Activated CD8-positive, alpha-beta T cell treated with anti-CD3 and anti-CD28 coated beads, Interleukin-2, amount 10 ng/mL, durations not matched to agents 7 days and 5 days (primary cell): ENCODE measurements at regions of chr11 and their contacts with region 1.

Region 1: GRCh38 chr11:47407746-47408590 is at the start of gene SLC39A13:
- DNase-seq: peak; percentile 91
- ATAC-seq: peak; percentile 84
- H3K4me3 Mint-ChIP-seq: peak within 1 kb of the TSS; percentile 91
- H3K27ac Mint-ChIP-seq: peak within 1 kb of the TSS; percentile 90
- H3K4me1 Mint-ChIP-seq: peaks cover 20% of the 10 kb centered on the region
- H3K27me3 Mint-ChIP-seq: no peaks in the 10 kb centered on the region
- total RNA-seq, gene SLC39A13: 19.2 to 20.0 TPM

Region 2: DNA sequence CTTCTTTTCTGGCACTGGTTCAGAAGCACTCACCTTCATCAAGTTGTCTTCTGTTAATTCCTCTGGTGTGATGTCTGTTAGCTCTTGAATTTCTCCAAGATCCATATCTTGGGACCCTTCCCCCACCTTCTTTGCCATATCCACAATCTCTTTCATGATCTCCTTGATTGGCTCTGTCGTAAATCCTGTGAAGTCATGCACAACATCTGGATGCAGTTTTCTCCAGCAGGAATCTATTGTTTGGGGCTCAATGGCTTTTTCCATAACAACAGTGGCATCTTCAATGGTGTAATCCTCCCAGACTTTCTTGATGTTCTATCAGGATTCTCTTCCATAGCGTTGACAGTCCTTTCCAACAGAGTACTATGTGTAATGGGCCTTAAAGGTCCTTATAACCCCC is 374.5 kb before region 1 on chr11:
- CTCF ChIA-PET with region 1: no interaction called
- POLR2A ChIA-PET with region 1: no interaction called
- DNase-seq: no peak
- ATAC-seq: no peak
- H3K4me3 Mint-ChIP-seq: no peak overlapping the region
- H3K27ac Mint-ChIP-seq: no peak overlapping the region
- H3K4me1 Mint-ChIP-seq: peaks cover 2% of the 10 kb centered on the region
- H3K27me3 Mint-ChIP-seq: no peaks in the 10 kb centered on the region

Region 3: GRCh38 chr11:47269002-47269828 is 138.8 kb before region 1 on chr11:
- CTCF ChIA-PET with region 1: interaction called, 11 read pairs
- POLR2A ChIA-PET with region 1: interaction called, 3 read pairs
- DNase-seq: peak; percentile 90
- ATAC-seq: peak; percentile 55
- H3K4me3 Mint-ChIP-seq: peak overlapping the region; percentile 84
- H3K27ac Mint-ChIP-seq: peak overlapping the region; percentile 98
- H3K4me1 Mint-ChIP-seq: peaks cover 68% of the 10 kb centered on the region
- H3K27me3 Mint-ChIP-seq: no peaks in the 10 kb centered on the region

Region 4: DNA sequence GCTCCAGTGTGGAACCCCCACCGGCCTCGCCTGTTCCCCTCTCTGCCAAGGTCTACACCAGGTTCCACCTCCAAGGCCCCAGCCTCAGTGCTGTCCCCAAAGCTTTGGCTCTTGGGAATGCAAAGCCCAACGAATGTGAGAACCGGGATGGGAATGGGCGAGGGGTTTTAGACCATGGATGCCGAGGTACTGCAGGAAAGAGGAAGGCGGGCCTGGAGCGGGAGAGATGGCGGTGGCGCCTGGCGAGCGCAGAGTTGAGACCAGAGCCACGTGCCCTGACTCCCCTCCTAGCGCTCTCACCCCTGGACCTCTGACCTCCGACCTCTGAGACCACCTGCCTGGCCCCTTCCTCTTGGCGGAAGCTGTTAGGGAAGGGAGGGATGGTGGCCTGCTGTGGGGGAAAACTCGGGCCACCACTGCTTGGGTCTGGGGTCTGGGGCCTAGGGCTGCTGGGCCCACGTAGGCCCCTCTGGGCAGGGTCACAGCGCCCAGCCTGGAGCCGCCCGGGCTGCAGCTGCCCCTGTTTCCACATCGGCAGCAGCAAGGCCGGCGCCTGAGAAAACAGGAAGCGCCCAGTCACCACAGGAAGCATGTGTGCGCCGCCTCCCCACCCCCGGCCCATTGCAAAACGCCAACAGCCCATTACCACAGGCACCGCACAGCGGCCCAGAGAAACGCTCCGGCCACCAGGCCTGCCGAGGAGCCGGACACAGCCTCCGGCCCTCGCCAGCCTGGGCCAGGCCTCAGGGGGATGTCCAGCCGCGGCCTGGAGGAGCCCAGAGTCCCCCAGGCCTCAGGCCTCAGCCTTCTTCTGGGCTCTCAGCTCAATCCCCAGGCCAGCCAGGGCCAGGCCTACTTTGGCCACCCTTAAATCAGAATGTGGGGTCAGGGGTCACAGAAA is 13.4 kb before region 1 on chr11:
- CTCF ChIA-PET with region 1: interaction called, 20 read pairs
- POLR2A ChIA-PET with region 1: interaction called, 5 read pairs
- DNase-seq: peak; percentile 71
- ATAC-seq: peak; percentile 80
- H3K4me3 Mint-ChIP-seq: peak overlapping the region; percentile 36
- H3K27ac Mint-ChIP-seq: peak overlapping the region; percentile 93
- H3K4me1 Mint-ChIP-seq: peaks cover 39% of the 10 kb centered on the region
- H3K27me3 Mint-ChIP-seq: no peaks in the 10 kb centered on the region

Region 5: GRCh38 chr11:47426061-47426956 is 18.3 kb after region 1 on chr11 and contains the start of gene PSMC3:
- CTCF ChIA-PET with region 1: interaction called, 14 read pairs
- POLR2A ChIA-PET with region 1: interaction called, 36 read pairs
- DNase-seq: peak; percentile 99
- ATAC-seq: peak; percentile 96
- H3K4me3 Mint-ChIP-seq: peak within 1 kb of the TSS; percentile 100
- H3K27ac Mint-ChIP-seq: peak within 1 kb of the TSS; percentile 100
- H3K4me1 Mint-ChIP-seq: peaks cover 29% of the 10 kb centered on the region
- H3K27me3 Mint-ChIP-seq: no peaks in the 10 kb centered on the region
- total RNA-seq, gene PSMC3: 179 TPM

Region 6: DNA sequence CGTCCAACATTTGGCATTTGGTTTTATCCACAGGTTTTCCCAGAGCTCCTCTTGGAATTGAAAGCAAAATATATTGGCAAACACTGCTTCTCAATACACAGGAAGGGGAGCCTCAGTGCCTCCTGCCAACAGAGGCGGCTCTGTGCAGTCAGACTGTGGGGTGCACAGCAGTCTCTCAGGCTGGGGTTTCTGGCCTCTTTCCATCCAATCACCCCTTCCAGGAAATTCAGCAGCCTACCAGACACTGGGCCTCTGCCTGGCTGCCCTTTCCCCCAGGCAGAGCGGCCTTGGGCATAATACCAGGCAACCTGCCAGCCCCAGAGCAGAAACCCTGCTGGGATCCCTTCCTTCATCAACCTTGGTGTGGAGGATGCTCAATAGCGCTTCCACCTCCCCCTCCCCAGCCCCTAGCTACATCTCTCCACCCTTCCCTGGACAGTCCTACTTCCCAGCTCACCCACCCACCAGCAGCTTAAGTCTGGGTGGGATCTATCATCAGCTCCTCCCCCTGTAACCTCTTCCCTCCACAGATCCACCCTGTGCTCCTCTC is 58.8 kb after region 1 on chr11:
- CTCF ChIA-PET with region 1: no interaction called
- POLR2A ChIA-PET with region 1: no interaction called
- DNase-seq: no peak
- ATAC-seq: no peak
- H3K4me3 Mint-ChIP-seq: no peak overlapping the region
- H3K27ac Mint-ChIP-seq: no peak overlapping the region
- H3K4me1 Mint-ChIP-seq: peaks cover 2% of the 10 kb centered on the region
- H3K27me3 Mint-ChIP-seq: no peaks in the 10 kb centered on the region